Stomach (tissue), 19 donors: ENCODE measurements at regions of chr21 and their contacts with region 1.

Region 1: DNA sequence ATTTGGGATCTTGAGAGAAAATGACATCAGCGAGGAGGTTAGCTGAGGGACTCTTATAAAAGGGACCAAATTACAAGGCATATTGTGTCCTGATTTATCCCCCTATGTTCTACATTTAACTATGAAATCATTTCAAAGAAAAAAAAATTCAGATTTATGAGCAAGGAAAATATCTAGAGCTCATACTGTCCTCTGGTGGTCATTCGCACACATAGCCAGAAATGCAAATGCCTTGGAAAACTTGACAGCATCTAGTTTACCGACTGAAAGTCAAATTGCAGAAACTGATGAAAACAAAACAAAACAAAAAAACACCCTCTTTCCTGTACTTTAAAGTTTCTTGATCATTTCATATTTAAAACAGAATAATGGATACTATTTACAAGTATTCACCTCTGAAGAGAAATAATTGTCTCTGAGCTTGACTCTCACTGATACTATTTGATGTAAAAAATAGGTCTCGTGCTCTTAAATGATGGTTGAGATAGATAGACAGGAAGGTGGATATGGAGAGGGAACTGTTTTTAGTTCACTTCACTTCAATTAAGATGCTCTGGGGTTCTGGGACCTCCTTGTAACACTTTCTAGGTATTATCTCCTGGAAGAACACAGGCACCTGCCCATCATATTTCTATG is 253.8 kb downstream of the PCP4 start:
- DNase-seq: peak in 1 of 2 donors; percentile 68
- H3K4me3 ChIP-seq: no peak overlapping the region
- H3K27ac ChIP-seq: no peak overlapping the region
- H3K4me1 ChIP-seq: no peaks in the 10 kb centered on the region
- H3K27me3 ChIP-seq: no peaks in the 10 kb centered on the region
- CTCF ChIP-seq: peak in 5 of 7 experiments; percentile 67 to 89 (median 80)
- EP300 ChIP-seq: no peak
- POLR2A ChIP-seq: no peak

Region 2: DNA sequence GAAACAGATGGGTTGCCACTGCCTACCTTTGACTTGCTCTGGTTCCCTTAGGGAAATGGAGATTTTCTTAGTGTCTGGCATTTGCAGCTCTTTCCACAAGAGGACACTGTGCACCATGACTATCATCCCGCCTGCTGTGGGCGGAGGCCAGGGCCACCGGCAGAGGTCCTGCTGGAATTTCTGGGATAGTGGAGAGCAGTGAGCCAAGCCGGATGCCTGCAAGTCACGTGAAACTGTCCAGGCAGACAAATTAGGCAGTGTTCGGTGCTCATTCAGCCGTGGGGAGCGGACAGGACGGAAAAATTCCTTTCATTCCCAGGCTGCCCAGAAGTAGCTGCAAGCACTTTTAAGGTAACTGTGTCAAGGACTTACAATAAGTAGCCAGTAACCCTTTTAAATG is 332.7 kb before region 1 on chr21:
- intact Hi-C with region 1: loop called (anchors 5 kb)
- DNase-seq: peak; percentile 78 to 92
- H3K4me3 ChIP-seq: peak overlapping the region in 2 of 4 donors; percentile 18
- H3K27ac ChIP-seq: no peak overlapping the region
- H3K4me1 ChIP-seq: peaks cover 0 to 7% (median 4%) of the 10 kb centered on the region in 4 donors
- H3K27me3 ChIP-seq: no peaks in the 10 kb centered on the region
- CTCF ChIP-seq: peak in 5 of 7 experiments; percentile 69 to 93 (median 73)
- EP300 ChIP-seq: no peak
- POLR2A ChIP-seq: no peak

Region 3: GRCh38 chr21:39867198-39867650 is 253.8 kb before region 1 on chr21 and contains the start of gene PCP4:
- intact Hi-C with region 1: loop called (anchors 10 kb)
- DNase-seq: peak; percentile 48 to 84
- H3K4me3 ChIP-seq: no peak within 1 kb of the TSS
- H3K27ac ChIP-seq: no peak within 1 kb of the TSS
- H3K4me1 ChIP-seq: peaks cover 0 to 8% (median 2%) of the 10 kb centered on the region in 4 donors
- H3K27me3 ChIP-seq: peaks cover 0 to 13% (median 0%) of the 10 kb centered on the region in 3 donors
- CTCF ChIP-seq: peak in 5 of 7 experiments; percentile 27 to 81 (median 75)
- EP300 ChIP-seq: no peak
- POLR2A ChIP-seq: no peak
- total RNA-seq, gene PCP4: 1.8 to 29.9 (median 2.0) TPM in 3 of 5 donors, not detected in the others

Region 4: GRCh38 chr21:40049394-40050290 is 71.4 kb before region 1 on chr21:
- intact Hi-C with region 1: loop called (anchors 10 kb)
- DNase-seq: peak in 1 of 2 donors; percentile 52
- H3K4me3 ChIP-seq: no peak overlapping the region
- H3K27ac ChIP-seq: peak overlapping the region; percentile 11 to 76 (median 46)
- H3K4me1 ChIP-seq: peaks cover 0 to 58% (median 14%) of the 10 kb centered on the region in 4 donors
- H3K27me3 ChIP-seq: peaks cover 0 to 5% (median 0%) of the 10 kb centered on the region in 3 donors
- CTCF ChIP-seq: no peak
- EP300 ChIP-seq: no peak
- POLR2A ChIP-seq: no peak

Region 5: DNA sequence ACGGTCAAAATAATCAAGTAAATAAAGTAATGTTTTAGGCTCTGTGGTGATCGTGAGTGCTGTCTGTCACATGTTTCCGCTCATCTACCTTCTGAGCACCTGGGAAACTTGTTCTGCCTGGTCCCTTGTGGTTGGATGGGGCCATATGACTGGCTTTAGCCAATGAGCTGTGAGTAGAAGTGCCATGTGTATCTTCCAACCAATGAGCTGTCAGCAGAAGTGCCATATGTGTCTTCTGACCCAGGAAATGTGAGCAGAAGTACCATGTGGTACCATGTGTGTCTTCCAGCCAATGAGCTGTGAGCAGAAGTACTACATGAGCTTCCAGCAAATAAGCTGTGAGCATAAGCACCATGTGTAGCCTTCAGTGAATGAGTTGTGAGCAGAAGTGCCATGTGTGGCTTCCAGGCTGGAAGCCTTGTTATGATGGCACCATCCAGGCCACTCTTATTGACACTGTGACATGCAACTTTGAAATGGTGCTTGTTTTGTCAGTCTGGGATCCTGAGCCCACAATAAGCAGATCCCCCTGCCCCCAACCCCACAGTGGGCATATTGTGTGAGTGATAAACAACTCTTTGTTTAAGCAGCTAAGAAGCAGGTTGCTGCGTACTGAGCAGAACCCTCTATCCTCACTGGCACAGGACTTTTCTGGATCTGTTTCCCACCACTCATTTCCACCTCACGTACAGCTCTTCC is 121.3 kb after region 1 on chr21:
- intact Hi-C with region 1: no loop called
- DNase-seq: no peak
- H3K4me3 ChIP-seq: no peak overlapping the region
- H3K27ac ChIP-seq: no peak overlapping the region
- H3K4me1 ChIP-seq: no peaks in the 10 kb centered on the region
- H3K27me3 ChIP-seq: no peaks in the 10 kb centered on the region
- CTCF ChIP-seq: no peak
- EP300 ChIP-seq: no peak
- POLR2A ChIP-seq: no peak